ENCODE measurements at regions of chr17 and their contacts with region 1.

Region 1: GRCh38 chr17:65231662-65232335 is 94.6 kb downstream of the RGS9 start:
- DNase-seq: peak; percentile 72
- H3K4me3 ChIP-seq: no peak overlapping the region
- H3K27ac ChIP-seq: no peak overlapping the region
- H3K4me1 ChIP-seq: peaks cover 13% of the 10 kb centered on the region
- H3K27me3 ChIP-seq: peaks cover 8 to 10% of the 10 kb centered on the region in 2 experiments
- CTCF ChIP-seq: peak; percentile 80 to 82
- POLR2A ChIP-seq: no peak

Region 2: DNA sequence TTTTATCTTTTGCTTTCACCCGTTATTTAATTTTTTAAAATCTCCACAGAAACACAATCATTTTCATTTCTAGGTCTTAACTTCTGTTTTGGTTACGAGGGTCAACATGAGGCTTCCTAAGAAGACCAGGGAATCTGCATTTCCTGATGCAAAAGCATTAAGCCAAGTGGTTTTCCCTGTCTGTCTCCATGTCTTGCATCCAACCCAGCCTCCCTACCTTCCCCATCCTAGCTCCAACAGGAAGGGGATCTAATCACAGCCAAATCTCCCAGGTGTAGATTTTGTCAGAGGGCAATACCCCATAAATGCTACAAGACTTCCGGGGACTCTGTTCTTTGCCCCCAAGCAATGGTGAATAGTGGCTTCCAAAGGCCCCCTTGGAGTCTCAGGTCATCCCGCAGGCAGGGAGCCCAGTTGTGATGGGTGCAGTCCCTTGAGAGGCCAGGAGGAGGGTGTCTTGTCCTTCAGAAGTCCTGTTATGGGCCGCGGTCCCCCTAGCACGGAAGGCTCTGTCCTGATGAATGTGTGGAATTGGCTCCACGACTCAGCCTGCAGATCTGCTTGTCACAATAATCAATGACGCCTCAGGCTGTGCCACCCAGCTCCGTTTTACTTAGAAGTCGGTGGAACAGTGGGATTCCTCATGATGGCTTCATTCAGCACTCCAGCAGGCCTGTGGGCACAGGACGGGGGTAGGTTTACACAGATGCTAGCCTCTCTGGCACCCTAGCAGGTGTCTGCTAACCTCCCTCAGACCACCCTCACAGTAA is 46.4 kb after region 1 on chr17:
- CTCF ChIA-PET with region 1: interaction called, 21 read pairs
- POLR2A ChIA-PET with region 1: no interaction called
- dilution Hi-C with region 1: no loop called
- intact Hi-C with region 1: loop called (anchors 1 kb)
- DNase-seq: peak; percentile 58
- H3K4me3 ChIP-seq: no peak overlapping the region
- H3K27ac ChIP-seq: no peak overlapping the region
- H3K4me1 ChIP-seq: peaks cover 1% of the 10 kb centered on the region
- H3K27me3 ChIP-seq: no peaks in the 10 kb centered on the region
- CTCF ChIP-seq: peak; percentile 79 to 80
- POLR2A ChIP-seq: no peak

Region 3: DNA sequence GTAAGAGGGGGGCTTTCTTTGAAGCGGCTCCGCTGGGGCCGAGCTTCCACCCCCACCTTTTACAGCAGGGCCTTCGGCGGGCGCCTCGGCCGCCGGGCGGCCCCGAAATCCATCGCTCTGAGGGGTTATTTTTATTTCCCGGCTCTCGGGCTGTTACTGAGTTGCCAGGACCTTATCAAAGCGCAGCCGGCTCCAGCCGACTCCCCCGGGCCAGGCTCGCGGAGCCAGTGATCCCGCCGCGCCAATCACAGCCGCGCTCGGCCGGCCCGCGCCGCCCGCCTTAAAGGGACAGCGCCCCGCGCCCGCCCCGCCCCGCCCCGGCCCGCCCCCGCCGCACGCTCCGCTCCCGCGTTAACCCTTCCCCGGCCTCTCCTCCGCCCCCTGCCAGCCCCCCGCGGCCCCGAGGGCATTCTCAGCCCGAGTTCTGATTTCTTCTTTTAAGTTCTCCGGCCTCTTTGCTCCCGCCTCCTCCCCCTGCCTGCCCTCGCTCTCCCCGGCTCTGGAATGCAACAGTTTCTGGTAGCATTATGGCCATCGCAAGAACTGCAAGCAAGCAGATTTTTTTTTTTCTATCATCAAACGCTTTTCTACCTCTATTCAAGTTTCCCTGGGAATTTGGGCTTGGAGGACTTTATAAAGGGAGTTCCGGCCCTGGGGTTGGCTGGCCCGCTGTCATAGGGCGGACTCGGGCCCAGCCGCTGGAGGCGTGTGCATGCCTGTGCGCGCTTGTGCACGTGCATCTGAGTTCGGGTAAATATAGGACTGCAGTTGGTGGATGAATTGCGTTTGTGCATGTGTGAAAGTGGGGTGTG is 329.8 kb after region 1 on chr17 and contains the start of gene AXIN2:
- CTCF ChIA-PET with region 1: interaction called, 67 read pairs
- POLR2A ChIA-PET with region 1: no interaction called
- dilution Hi-C with region 1: no loop called
- intact Hi-C with region 1: loop called (anchors 1 kb)
- DNase-seq: peak; percentile 87
- H3K4me3 ChIP-seq: peak within 1 kb of the TSS; percentile 51 to 83 (median 71)
- H3K27ac ChIP-seq: peak within 1 kb of the TSS; percentile 73
- H3K4me1 ChIP-seq: peaks cover 12% of the 10 kb centered on the region
- H3K27me3 ChIP-seq: peaks cover 4 to 5% of the 10 kb centered on the region in 2 experiments
- CTCF ChIP-seq: peak in 1 of 2 donors; percentile 15
- POLR2A ChIP-seq: no peak
- total RNA-seq, gene AXIN2: 3.0 and 3.1 TPM in 2 replicates

Region 4: DNA sequence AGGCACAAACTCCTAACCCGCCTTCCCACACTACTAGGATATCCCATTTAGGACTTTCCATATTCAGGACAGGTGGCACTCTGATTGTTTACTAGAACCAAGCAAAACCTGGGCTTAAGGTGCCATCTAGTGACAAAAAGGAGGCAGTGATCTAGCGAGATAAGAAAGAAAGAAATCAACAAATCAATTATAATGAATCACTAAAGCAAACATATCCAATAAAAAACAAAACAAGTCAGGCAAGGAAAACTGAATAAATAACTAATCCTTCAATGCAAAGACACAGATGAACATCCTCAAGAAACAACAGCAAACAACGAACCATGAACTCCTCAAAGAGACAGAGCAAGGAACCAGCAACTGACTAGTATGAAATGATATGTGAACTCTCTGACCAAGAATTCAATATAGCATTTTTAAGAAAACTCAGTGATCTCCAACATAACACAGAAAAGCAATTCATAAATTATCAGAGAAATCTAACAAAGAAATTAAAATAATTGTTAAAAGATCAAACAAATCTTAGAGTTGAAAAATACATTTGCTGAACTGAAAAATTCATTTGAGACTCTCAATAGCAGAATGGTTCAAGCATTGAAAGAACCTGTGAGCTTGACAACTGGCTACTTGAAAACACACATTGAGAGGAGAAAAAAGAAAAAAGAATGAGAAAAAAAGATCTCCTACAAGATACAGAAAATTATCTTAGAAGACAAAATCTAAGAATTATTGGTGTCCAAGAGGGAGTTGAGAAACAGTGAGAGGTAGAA is 756.5 kb after region 1 on chr17:
- CTCF ChIA-PET with region 1: interaction called, 22 read pairs
- POLR2A ChIA-PET with region 1: no interaction called
- dilution Hi-C with region 1: no loop called
- intact Hi-C with region 1: loop called (anchors 1 kb)
- DNase-seq: peak; percentile 54
- H3K4me3 ChIP-seq: no peak overlapping the region
- H3K27ac ChIP-seq: no peak overlapping the region
- H3K4me1 ChIP-seq: no peaks in the 10 kb centered on the region
- H3K27me3 ChIP-seq: no peaks in the 10 kb centered on the region
- CTCF ChIP-seq: peak; percentile 30 to 60
- POLR2A ChIP-seq: no peak

Region 5: GRCh38 chr17:66906321-66907278 is 1674.8 kb after region 1 on chr17:
- CTCF ChIA-PET with region 1: interaction called, 4 read pairs
- POLR2A ChIA-PET with region 1: no interaction called
- dilution Hi-C with region 1: no loop called
- intact Hi-C with region 1: loop called (anchors 10 kb)
- DNase-seq: peak; percentile 71
- H3K4me3 ChIP-seq: no peak overlapping the region
- H3K27ac ChIP-seq: no peak overlapping the region
- H3K4me1 ChIP-seq: peaks cover 9% of the 10 kb centered on the region
- H3K27me3 ChIP-seq: no peaks in the 10 kb centered on the region
- CTCF ChIP-seq: peak; percentile 82 to 90
- POLR2A ChIP-seq: no peak